Activated T-helper 1 cell treated with anti-CD3 and anti-CD28 coated beads, Interleukin-12 subunit alpha, Interleukin-12 subunit beta, Interleukin-2, Interleukin-4 antibody, amounts not matched to agents 30 ng/mL and 10 ng/mL and 1 ng/mL, durations not matched to agents 14 hours and 24 hours and 36 hours (primary cell): ENCODE measurements at regions of chr17 and their contacts with region 1.

Region 1: GRCh38 chr17:56319517-56319916 is 166.2 kb downstream of the ANKFN1 start:
- DNase-seq: no peak
- H3K4me3 Mint-ChIP-seq: no peak overlapping the region
- H3K27ac Mint-ChIP-seq: no peak overlapping the region
- H3K4me1 Mint-ChIP-seq: no peaks in the 10 kb centered on the region
- H3K27me3 Mint-ChIP-seq: peaks cover 11% of the 10 kb centered on the region

Region 2: GRCh38 chr17:55743103-55743679 is 576.3 kb before region 1 on chr17:
- intact Hi-C with region 1: loop called (anchors 10 kb)
- DNase-seq: no peak
- H3K4me3 Mint-ChIP-seq: no peak overlapping the region
- H3K27ac Mint-ChIP-seq: no peak overlapping the region
- H3K4me1 Mint-ChIP-seq: no peaks in the 10 kb centered on the region
- H3K27me3 Mint-ChIP-seq: peaks cover 35% of the 10 kb centered on the region

Region 3: DNA sequence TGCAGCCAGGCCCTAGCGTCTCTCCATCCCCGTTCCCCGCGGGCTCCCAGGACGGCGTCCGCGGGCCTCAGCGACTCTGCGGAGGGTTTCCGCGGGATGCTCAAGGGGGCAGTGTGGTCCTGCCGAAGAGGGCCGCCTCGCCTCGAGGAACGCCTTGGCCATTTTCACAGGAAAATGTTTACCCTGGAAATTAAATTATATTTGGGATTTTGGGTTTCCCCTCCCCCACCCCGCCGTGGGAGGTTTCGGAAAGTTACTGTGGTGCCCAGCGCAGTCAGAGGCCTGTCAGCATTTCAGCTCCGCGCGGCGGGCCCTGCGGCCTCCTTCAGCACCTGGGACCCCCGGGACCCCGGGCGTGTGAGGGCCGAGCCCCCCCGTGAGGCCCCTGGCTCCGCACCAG is 474.1 kb before region 1 on chr17:
- intact Hi-C with region 1: loop called (anchors 5 kb)
- DNase-seq: no peak
- H3K4me3 Mint-ChIP-seq: no peak overlapping the region
- H3K27ac Mint-ChIP-seq: no peak overlapping the region
- H3K4me1 Mint-ChIP-seq: no peaks in the 10 kb centered on the region
- H3K27me3 Mint-ChIP-seq: peaks cover 4% of the 10 kb centered on the region

Region 4: GRCh38 chr17:55996825-55997224 is 322.7 kb before region 1 on chr17:
- intact Hi-C with region 1: loop called (anchors 1 kb)
- DNase-seq: no peak
- H3K4me3 Mint-ChIP-seq: no peak overlapping the region
- H3K27ac Mint-ChIP-seq: no peak overlapping the region
- H3K4me1 Mint-ChIP-seq: no peaks in the 10 kb centered on the region
- H3K27me3 Mint-ChIP-seq: peaks cover 3% of the 10 kb centered on the region

Region 5: DNA sequence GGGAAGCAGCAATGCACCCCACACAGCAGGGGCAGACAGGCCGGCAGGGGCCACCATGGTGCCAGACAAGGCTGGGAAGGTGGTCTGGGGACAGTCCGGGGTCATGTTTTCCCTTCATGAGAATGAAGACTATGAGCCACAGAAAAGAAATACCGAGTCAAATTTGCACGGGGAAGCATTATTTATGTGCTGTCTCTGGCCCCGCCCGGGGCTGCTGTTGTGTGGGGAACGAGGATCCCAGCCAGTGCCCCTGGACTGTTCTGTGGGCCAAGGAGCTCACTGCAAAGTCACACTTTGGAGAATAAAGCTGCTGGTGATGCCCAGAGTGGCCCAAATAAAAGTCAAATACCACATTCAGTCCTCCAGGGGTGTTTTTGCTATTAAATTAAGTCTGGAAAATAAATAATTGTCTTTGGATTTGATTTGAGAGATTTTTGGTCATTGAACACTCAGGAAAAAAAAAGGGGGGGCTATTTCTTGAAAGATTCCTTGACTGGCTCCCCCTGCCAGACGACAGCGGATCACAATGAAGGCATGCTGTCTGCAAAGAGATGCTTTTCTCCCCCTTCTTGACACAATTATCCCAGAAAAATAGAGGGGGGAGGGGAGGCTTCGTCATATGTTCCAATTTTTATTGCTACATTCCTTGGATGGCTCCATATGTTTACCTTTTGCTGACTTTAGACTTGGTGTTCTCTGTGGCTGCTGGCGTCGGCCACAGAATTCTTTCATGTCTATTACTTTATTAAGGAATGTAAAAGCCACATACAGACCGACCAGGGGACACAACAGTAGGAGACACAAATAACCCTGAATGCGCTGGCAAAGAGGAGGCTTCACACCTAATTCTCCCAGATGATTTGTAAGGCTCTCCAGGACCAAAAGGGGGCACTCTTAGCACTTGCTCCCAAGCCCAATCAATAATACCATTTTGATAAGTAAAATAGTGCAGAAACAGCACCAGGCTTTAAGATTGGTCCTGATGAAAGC is 193.4 kb before region 1 on chr17:
- intact Hi-C with region 1: loop called (anchors 1 kb)
- DNase-seq: no peak
- H3K4me3 Mint-ChIP-seq: no peak overlapping the region
- H3K27ac Mint-ChIP-seq: no peak overlapping the region
- H3K4me1 Mint-ChIP-seq: no peaks in the 10 kb centered on the region
- H3K27me3 Mint-ChIP-seq: peaks cover 2% of the 10 kb centered on the region